Psoas muscle (tissue), 8 donors: ENCODE measurements at regions of chr12 and their contacts with region 1.

Region 1: GRCh38 chr12:69239922-69240630 is 707 bp downstream of the CPSF6 start:
- DNase-seq: peak; percentile 52 to 59
- ATAC-seq: peak; percentile 19 to 41 (median 32)
- H3K4me3 ChIP-seq: peak overlapping the region; percentile 90
- H3K27ac ChIP-seq: peak overlapping the region; percentile 93
- H3K4me1 ChIP-seq: peaks cover 33% of the 10 kb centered on the region
- H3K27me3 ChIP-seq: no peaks in the 10 kb centered on the region
- CTCF ChIP-seq: no peak

Region 2: DNA sequence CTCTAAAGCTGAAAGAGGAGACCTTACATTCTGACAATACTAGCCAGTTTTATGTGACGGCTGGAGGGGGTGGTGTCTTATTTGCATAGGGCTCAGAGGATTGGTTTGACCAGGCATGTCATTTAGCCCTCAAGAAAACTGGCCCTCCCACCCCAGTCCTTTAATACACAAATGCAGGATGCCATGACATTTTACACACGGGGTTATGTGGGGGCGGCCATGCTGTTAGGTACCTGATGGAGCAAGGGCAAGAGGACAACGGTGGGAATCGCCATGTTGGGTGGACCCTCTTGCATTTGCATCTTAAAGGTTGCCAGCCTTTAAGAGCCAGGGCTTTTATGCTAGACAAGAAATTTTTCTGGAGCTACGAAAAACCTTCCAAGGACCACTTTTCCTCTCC is 408.8 kb before region 1 on chr12:
- intact Hi-C with region 1: loop called in 1 of 2 experiments (anchors 10 kb)
- DNase-seq: no peak
- ATAC-seq: peak in 1 of 4 donors; percentile 13
- H3K4me3 ChIP-seq: no peak overlapping the region
- H3K27ac ChIP-seq: no peak overlapping the region
- H3K4me1 ChIP-seq: peaks cover 6% of the 10 kb centered on the region
- H3K27me3 ChIP-seq: no peaks in the 10 kb centered on the region
- CTCF ChIP-seq: no peak

Region 3: GRCh38 chr12:69388371-69388770 is 148.3 kb after region 1 on chr12:
- intact Hi-C with region 1: no loop called
- DNase-seq: no peak
- ATAC-seq: no peak
- H3K4me3 ChIP-seq: no peak overlapping the region
- H3K27ac ChIP-seq: no peak overlapping the region
- H3K4me1 ChIP-seq: no peaks in the 10 kb centered on the region
- H3K27me3 ChIP-seq: no peaks in the 10 kb centered on the region
- CTCF ChIP-seq: peak; percentile 53